ENCODE measurements at regions of chr5 and their contacts with region 1.

Region 1: GRCh38 chr5:32489791-32490582 is 45.4 kb upstream of the ZFR start:
- DNase-seq: peak; percentile 85
- ATAC-seq: peak; percentile 53
- H3K4me3 Mint-ChIP-seq: no peak overlapping the region
- H3K27ac Mint-ChIP-seq: no peak overlapping the region
- H3K4me1 Mint-ChIP-seq: no peaks in the 10 kb centered on the region
- H3K27me3 Mint-ChIP-seq: no peaks in the 10 kb centered on the region

Region 2: GRCh38 chr5:32504989-32505596 is 15.1 kb after region 1 on chr5:
- CTCF ChIA-PET with region 1: interaction called, 23 read pairs
- POLR2A ChIA-PET with region 1: no interaction called
- intact Hi-C with region 1: no loop called
- DNase-seq: peak; percentile 13
- ATAC-seq: peak; percentile 9
- H3K4me3 Mint-ChIP-seq: no peak overlapping the region
- H3K27ac Mint-ChIP-seq: peak overlapping the region; percentile 25
- H3K4me1 Mint-ChIP-seq: peaks cover 16% of the 10 kb centered on the region
- H3K27me3 Mint-ChIP-seq: peaks cover 6% of the 10 kb centered on the region

Region 3: GRCh38 chr5:32613050-32613672 is 123.2 kb after region 1 on chr5:
- CTCF ChIA-PET with region 1: interaction called, 56 read pairs
- POLR2A ChIA-PET with region 1: interaction called, 3 read pairs
- intact Hi-C with region 1: loop called (anchors 1 kb)
- DNase-seq: peak; percentile 91
- ATAC-seq: peak; percentile 93
- H3K4me3 Mint-ChIP-seq: no peak overlapping the region
- H3K27ac Mint-ChIP-seq: peak overlapping the region; percentile 67
- H3K4me1 Mint-ChIP-seq: peaks cover 4% of the 10 kb centered on the region
- H3K27me3 Mint-ChIP-seq: no peaks in the 10 kb centered on the region

Measured in activated CD4-positive, alpha-beta T cell treated with anti-CD3 and anti-CD28 coated beads for 36 hours (primary cell).